HEK293 (cell line): ENCODE measurements at regions of chr22 and their contacts with region 1.

Region 1: DNA sequence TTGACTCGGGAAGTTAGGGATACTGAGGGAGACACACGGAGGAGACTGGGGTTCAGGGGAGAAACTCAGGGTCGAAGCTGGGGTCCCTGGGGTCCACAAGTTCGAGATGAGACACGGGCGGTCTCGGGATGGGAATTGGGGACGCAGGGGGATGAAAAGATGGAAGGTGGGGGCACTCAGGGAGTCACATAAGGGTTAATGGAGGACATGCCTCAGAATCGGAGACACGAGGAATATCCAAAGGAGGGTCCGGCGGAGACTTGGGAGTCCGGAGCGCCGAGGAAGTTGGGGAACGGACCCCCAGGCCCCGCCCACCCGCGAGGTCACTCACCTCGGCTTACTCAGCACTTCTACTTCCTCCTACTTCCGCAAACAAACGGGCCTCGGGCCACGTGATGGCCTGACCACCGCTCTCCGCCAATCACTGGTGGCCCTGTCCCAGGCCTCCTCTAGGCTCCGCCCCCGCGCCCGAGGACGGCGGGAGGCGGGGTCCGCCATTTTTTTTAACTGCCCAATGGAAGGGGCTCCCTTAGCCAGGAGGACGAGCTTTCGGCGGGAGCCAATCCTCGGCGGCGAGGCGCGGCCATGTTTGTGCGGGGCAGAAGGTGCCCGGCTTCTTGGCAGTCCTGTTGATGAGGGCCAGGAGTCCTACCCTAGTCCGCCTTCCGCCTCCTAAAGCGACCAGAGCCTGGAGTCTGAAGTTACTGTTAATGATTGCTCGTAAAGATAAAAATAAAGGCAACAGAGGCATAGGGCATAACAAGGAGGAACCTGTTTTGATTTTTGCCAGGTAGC is at the start of gene PLA2G6:
- H3K4me3 ChIP-seq: peak within 1 kb of the TSS; percentile 77
- H3K27ac ChIP-seq: peak within 1 kb of the TSS; percentile 82
- H3K4me1 ChIP-seq: peaks cover 13% of the 10 kb centered on the region
- CTCF ChIP-seq: no peak

Region 2: DNA sequence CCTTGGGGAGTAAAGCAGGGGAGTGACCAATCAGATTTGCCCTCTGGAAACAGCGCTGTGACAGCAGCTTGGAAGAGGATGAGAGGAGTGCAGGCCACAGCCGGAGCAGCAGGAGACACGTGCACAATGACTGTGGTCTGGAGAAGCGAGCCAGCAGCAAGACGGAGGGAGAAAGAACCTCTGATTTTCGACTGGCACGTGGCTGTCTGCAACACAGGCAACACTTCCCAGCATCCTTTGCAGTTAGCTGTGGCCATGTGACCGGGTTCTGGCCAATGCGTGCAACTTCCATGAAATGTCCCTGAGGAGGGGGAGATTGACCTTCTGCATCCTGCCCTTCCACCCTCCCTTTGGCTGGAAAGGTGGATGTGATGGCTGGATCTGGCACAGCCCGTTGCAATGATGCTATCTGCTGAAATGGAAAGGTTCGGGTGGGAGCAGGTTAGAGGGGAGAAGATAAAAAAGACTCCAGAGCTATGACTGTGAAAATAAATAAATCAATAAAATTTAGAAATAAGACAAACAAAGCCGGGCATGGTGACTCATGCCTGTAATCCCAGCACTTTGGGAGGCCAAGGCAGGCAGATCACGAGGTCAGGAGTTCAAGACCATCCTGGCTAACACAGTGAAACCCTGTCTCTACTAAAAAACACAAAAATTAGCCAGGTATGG is 15.6 kb before region 1 on chr22:
- CTCF ChIA-PET with region 1: interaction called, 5 read pairs
- POLR2A ChIA-PET with region 1: interaction called, 11 read pairs
- H3K4me3 ChIP-seq: no peak overlapping the region
- H3K27ac ChIP-seq: no peak overlapping the region
- H3K4me1 ChIP-seq: no peaks in the 10 kb centered on the region
- CTCF ChIP-seq: no peak

Region 3: DNA sequence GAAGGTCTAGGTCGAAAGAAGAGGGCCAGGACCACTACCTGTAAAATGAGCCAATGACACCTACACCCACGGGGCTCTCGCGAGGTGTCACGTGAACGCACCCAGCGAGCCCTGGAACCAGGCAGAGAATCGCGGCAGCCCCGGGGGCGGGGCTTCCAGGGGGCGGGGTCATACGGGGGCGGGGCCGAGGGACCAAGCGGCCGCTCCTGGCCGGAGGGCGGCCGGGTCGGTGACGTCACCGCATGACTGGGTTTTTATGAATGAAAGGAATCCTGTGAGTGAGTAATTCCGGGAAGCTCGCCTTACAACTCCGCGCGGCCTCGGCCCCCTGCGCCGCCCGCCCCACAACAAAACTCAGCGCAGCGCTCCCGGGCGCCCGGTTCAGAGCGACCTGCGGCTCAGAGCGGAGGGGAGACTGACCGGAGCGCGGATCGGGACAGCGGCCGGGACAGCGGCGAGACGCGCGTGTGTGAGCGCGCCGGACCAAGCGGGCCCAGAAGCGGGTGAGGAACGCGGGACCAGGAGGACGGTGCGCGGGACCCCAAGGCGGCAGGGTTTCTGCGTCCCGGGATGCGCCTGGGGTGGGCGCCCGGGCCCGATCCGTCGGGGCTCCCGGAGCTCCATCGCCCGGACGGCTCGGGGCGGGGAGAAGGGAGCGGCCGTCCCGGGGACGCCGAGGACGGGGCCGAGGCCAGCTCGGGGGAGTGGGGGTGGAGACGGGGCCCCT is 20.2 kb after region 1 on chr22 and contains the start of gene MAFF:
- CTCF ChIA-PET with region 1: interaction called, 4 read pairs
- POLR2A ChIA-PET with region 1: interaction called, 12 read pairs
- H3K4me3 ChIP-seq: peak within 1 kb of the TSS; percentile 64
- H3K27ac ChIP-seq: no peak within 1 kb of the TSS; the same call in none of the 2 replicates
- H3K4me1 ChIP-seq: no peaks in the 10 kb centered on the region
- CTCF ChIP-seq: no peak